Activated T-helper 1 cell treated with anti-CD3 and anti-CD28 coated beads, Interleukin-12 subunit alpha, Interleukin-12 subunit beta, Interleukin-2, Interleukin-4 antibody, amounts not matched to agents 30 ng/mL and 10 ng/mL and 1 ng/mL, durations not matched to agents 14 hours and 24 hours and 36 hours (primary cell): ENCODE measurements at regions of chrX and their contacts with region 1.

Region 1: DNA sequence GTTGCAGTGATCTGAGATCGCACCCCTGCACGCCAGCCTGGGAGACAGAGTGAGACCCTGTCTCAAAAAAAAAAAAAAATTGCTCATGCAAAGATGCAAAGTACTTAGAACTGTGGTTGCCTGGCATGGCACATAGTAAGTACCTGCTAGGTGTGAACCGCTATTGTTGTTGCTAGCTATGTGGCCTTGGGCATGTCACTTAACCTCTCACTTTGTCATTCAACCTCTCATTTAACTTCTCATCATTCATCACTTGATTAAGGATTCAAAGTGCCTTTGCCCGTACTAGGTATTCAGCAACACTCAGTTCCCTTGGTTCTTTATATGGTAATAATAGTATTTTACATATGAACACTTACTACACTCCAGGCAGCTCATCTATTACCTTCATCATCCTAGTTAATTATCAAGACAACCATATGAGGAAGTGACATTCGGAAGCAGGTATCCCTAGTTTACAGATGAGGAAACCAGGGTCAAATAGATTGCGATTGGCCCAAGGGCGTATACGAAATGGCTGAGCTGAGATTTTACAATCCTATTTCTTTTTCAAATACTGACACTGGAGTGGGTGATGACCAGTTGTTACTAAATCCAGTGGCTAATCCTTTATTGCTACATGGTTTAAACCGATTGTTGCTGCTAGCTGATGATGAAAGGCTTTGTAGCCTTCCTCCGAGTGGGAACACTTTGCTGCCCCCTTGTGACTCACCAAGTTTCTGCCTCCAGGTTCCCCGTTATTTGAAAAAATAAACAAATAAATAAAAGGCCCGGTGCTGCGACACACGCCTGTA is 28.8 kb upstream of the SOWAHD start:
- DNase-seq: peak; percentile 28
- H3K4me3 Mint-ChIP-seq: no peak overlapping the region
- H3K27ac Mint-ChIP-seq: no peak overlapping the region
- H3K4me1 Mint-ChIP-seq: peaks cover 6% of the 10 kb centered on the region
- H3K27me3 Mint-ChIP-seq: peaks cover 2% of the 10 kb centered on the region

Region 2: DNA sequence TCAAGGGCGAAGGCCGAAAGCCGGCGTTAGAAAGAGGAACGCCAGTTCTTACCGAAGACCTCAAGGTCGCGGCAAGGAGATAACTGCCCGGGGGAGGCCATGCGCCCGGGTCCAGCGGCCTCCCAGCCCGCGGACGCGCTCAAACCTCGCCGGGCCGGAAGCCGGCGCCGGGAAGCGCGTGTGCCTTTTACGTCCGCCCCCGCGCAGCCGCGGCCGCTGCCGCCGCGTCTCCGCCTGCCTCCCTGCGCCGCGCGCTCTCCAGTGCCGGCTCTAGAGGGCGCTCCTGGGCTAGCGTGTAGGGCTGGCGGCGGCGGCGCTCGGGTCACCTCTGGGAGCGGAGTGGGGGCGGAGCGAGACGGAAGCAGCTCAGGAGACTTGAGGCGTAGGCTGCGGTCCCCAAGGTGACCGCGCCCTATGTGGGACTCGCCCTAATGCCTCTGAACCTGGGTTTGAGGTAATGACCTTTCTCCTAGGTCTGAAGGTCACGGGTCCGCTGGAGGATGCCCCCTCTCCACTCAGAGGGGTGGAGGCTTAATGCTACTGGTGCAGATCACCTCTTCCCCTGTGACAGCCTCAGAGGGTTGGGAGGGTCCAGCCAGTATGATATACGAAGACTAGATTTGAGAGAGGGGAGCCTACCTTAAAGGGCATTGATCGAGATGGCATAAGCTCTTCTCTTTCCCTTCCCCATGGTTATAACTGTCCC is 260.5 kb before region 1 on chrX:
- intact Hi-C with region 1: no loop called
- DNase-seq: peak; percentile 83
- H3K4me3 Mint-ChIP-seq: peak overlapping the region; percentile 90
- H3K27ac Mint-ChIP-seq: peak overlapping the region; percentile 93
- H3K4me1 Mint-ChIP-seq: peaks cover 12% of the 10 kb centered on the region
- H3K27me3 Mint-ChIP-seq: no peaks in the 10 kb centered on the region

Region 3: DNA sequence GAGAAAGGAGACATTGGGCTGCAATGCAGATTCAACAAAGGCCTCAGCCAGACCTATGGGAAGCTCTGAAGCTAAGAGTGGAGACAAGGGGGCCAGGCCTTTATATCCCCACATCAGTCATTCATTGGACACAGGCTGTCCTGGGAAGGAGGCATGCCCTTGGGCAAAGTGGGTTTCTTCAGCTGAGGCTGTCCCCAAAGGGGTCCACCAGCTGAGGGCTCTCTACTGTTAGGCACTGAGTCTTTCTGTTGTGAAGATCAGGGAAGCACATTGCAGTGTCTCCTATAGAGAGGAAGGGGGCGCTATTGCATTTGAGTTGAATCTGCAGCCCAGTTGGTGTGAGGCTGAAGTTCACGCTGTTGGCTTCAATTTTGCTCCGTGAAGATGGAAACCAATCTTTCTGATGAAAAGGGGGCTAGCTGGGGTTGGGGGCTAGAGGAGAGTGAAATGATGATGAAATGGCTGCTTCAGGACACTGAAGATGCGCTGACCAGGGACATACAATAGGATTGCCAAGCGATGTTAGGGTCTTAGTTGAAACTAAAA is 213.4 kb before region 1 on chrX:
- intact Hi-C with region 1: loop called (anchors 1 kb)
- DNase-seq: peak; percentile 25
- H3K4me3 Mint-ChIP-seq: no peak overlapping the region
- H3K27ac Mint-ChIP-seq: peak overlapping the region; percentile 2
- H3K4me1 Mint-ChIP-seq: peaks cover 8% of the 10 kb centered on the region
- H3K27me3 Mint-ChIP-seq: peaks cover 2% of the 10 kb centered on the region

Region 4: GRCh38 chrX:119617517-119618164 is 112.0 kb before region 1 on chrX:
- intact Hi-C with region 1: loop called (anchors 1 kb)
- DNase-seq: no peak
- H3K4me3 Mint-ChIP-seq: no peak overlapping the region
- H3K27ac Mint-ChIP-seq: no peak overlapping the region
- H3K4me1 Mint-ChIP-seq: no peaks in the 10 kb centered on the region
- H3K27me3 Mint-ChIP-seq: no peaks in the 10 kb centered on the region

Region 5: GRCh38 chrX:119698845-119699244 is 30.8 kb before region 1 on chrX:
- intact Hi-C with region 1: loop called (anchors 1 kb)
- DNase-seq: no peak
- H3K4me3 Mint-ChIP-seq: no peak overlapping the region
- H3K27ac Mint-ChIP-seq: no peak overlapping the region
- H3K4me1 Mint-ChIP-seq: peaks cover 7% of the 10 kb centered on the region
- H3K27me3 Mint-ChIP-seq: peaks cover 2% of the 10 kb centered on the region